ENCODE measurements at regions of chr20 and their contacts with region 1.

Region 1: GRCh38 chr20:24992487-24993205 is at the start of gene APMAP:
- DNase-seq: peak; percentile 81 to 97
- H3K4me3 ChIP-seq: peak within 1 kb of the TSS; percentile 83 to 92
- H3K27ac ChIP-seq: peak within 1 kb of the TSS; percentile 96 to 99
- H3K4me1 ChIP-seq: peaks cover 0 to 17% of the 10 kb centered on the region in 2 donors
- H3K27me3 ChIP-seq: no peaks in the 10 kb centered on the region
- CTCF ChIP-seq: no peak
- total RNA-seq, gene APMAP: 44.8 TPM

Region 2: DNA sequence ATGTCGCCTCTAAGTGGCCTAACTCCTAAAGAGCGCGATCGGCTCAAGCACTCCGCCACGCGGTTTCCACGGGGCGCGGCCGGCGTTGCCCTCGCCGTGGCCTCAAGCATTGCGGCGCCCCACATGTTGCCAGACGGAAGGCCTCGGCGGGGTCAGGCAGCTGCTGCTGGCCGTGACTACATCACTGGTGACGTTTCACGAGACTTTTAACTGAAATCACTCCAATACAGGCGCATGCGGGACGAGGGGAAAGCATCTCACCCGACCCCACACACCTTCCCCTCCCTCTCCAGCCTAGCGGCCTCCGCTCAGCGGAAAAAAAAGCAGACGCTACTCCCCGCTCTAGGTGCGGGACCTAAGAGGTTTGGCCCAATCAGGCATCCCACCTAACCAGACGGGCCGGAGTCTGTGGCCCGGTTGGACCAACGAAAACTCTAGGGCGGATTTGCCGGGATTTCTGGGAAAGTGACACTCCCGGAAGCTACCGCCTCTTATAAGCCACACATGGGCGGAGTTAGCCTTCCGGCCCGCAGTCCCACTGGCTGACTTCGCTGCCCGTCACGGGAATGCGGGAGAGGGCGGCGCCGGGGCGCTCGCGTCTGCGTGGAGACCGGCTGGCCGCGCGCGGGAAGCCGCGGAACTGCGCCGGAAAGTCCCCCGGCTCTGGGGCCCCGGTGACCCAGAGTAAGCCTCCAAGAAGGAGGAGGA is 1642.3 kb before region 1 on chr20 and contains the start of gene NXT1:
- intact Hi-C with region 1: loop called (anchors 10 kb)
- DNase-seq: peak; percentile 93 to 99
- H3K4me3 ChIP-seq: peak within 1 kb of the TSS; percentile 93 to 97
- H3K27ac ChIP-seq: peak within 1 kb of the TSS; percentile 99 to 100
- H3K4me1 ChIP-seq: peaks cover 3 to 18% of the 10 kb centered on the region in 2 donors
- H3K27me3 ChIP-seq: no peaks in the 10 kb centered on the region
- CTCF ChIP-seq: peak in 1 of 3 experiments; percentile 0
- total RNA-seq, gene NXT1: 50.0 TPM

Region 3: DNA sequence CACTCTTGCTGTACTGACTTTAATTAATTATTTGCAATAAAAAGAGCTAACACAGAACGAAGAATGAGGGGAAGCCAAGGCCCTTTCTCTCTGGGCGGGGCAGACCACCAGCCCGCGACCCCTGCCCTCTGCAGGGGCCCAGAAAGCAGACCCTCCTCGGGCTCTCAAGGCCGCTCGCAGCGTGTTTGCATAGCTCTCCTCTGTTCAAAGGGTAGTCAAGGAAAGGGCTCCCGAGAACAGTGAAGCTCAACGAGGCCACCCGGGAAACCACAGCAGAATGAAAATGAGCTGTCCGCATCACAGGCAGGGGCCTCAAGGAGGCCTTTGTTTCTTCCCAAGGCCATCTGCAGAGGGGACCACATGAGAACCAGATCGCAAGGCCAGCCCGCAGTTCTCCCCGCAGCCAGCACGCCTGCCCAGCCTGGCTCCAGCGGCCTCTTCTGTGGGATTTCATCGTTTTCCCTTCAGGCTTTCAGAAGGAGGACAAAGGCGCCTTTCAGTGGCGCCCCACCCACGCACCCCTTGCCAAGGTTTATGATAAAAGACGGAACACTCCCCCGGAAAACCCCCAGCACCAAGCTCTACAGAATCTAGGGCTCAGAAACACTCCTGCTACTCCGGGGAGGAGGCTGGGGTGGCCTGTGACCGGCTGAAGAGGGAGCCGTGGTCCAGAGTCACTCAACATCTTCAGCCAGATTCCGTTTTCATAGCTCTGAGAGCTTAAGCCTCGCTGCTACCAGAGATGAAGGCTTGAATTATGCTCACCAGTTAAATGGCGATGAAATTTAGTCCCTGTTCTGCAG is 40.0 kb after region 1 on chr20:
- intact Hi-C with region 1: loop called (anchors 5 kb)
- DNase-seq: no peak
- H3K4me3 ChIP-seq: no peak overlapping the region
- H3K27ac ChIP-seq: peak overlapping the region; percentile 4 to 26
- H3K4me1 ChIP-seq: peaks cover 12 to 41% of the 10 kb centered on the region in 2 donors
- H3K27me3 ChIP-seq: no peaks in the 10 kb centered on the region
- CTCF ChIP-seq: peak in 1 of 3 experiments; percentile 20

Region 4: GRCh38 chr20:25136643-25137559 is 144.3 kb after region 1 on chr20:
- intact Hi-C with region 1: loop called (anchors 1 kb)
- DNase-seq: peak; percentile 40 to 90
- H3K4me3 ChIP-seq: no peak overlapping the region
- H3K27ac ChIP-seq: peak overlapping the region in 1 of 2 donors; percentile 26
- H3K4me1 ChIP-seq: peaks cover 0 to 3% of the 10 kb centered on the region in 2 donors
- H3K27me3 ChIP-seq: no peaks in the 10 kb centered on the region
- CTCF ChIP-seq: no peak

Region 5: GRCh38 chr20:25195014-25195961 is 202.6 kb after region 1 on chr20 and contains the start of gene ENTPD6:
- intact Hi-C with region 1: loop called (anchors 5 kb)
- DNase-seq: peak; percentile 63 to 93
- H3K4me3 ChIP-seq: peak within 1 kb of the TSS; percentile 78 to 87
- H3K27ac ChIP-seq: peak within 1 kb of the TSS; percentile 75
- H3K4me1 ChIP-seq: peaks cover 0 to 19% of the 10 kb centered on the region in 2 donors
- H3K27me3 ChIP-seq: no peaks in the 10 kb centered on the region
- CTCF ChIP-seq: peak in 2 of 3 experiments; percentile 8 to 38
- total RNA-seq, gene ENTPD6: 66.5 TPM

Region 6: GRCh38 chr20:25294459-25295385 is 302.1 kb after region 1 on chr20:
- intact Hi-C with region 1: loop called (anchors 2 kb)
- DNase-seq: no peak
- H3K4me3 ChIP-seq: no peak overlapping the region
- H3K27ac ChIP-seq: peak overlapping the region; percentile 61 to 64
- H3K4me1 ChIP-seq: peaks cover 7 to 27% of the 10 kb centered on the region in 2 donors
- H3K27me3 ChIP-seq: no peaks in the 10 kb centered on the region
- CTCF ChIP-seq: peak; percentile 57 to 80 (median 66)

Region 7: GRCh38 chr20:25399037-25399430 is 406.4 kb after region 1 on chr20:
- intact Hi-C with region 1: loop called (anchors 1 kb)
- DNase-seq: peak in 1 of 2 donors; percentile 66
- H3K4me3 ChIP-seq: no peak overlapping the region
- H3K27ac ChIP-seq: no peak overlapping the region
- H3K4me1 ChIP-seq: no peaks in the 10 kb centered on the region
- H3K27me3 ChIP-seq: peaks cover 4% of the 10 kb centered on the region
- CTCF ChIP-seq: peak; percentile 25 to 71 (median 54)

Measured in ascending aorta (tissue), 2 donors.